Kidney (tissue), 22 donors: ENCODE measurements at regions of chr16 and their contacts with region 1.

Region 1: GRCh38 chr16:67928561-67929364 is 2.9 kb downstream of the CTRL start:
- DNase-seq: peak; percentile 67 to 89 (median 77)
- H3K4me3 ChIP-seq: no peak overlapping the region
- H3K27ac ChIP-seq: no peak overlapping the region
- H3K4me1 ChIP-seq: peaks cover 0 to 6% (median 0%) of the 10 kb centered on the region in 3 donors
- H3K27me3 ChIP-seq: no peaks in the 10 kb centered on the region
- CTCF ChIP-seq: peak; percentile 85

Region 2: GRCh38 chr16:67672739-67673662 is 255.8 kb before region 1 on chr16:
- intact Hi-C with region 1: loop called (anchors 10 kb)
- DNase-seq: peak; percentile 51 to 83 (median 63)
- H3K4me3 ChIP-seq: peak overlapping the region in 1 of 3 donors; percentile 34
- H3K27ac ChIP-seq: peak overlapping the region; percentile 77 to 85
- H3K4me1 ChIP-seq: peaks cover 0 to 23% (median 20%) of the 10 kb centered on the region in 3 donors
- H3K27me3 ChIP-seq: no peaks in the 10 kb centered on the region
- CTCF ChIP-seq: peak; percentile 78

Region 3: DNA sequence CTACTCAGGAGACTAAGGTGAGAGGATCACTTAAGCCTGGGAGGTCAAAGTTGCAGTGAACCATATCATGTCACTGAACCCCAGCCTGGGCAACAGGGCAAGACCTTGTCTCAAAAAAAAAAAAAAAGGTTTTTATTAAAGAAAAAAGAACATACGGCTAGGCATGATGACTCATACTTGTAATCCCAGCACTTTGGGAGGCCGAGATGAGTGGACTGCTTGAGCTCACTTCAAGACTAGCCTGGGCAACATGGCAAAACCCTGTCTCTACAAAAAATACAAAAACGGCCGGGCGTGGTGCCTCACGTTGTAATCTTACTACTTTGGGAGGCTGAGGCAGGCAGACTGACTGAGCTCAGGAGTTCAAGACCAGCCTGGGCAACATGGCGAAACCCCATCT is 160.8 kb before region 1 on chr16:
- intact Hi-C with region 1: no loop called
- DNase-seq: no peak
- H3K4me3 ChIP-seq: no peak overlapping the region
- H3K27ac ChIP-seq: no peak overlapping the region
- H3K4me1 ChIP-seq: peaks cover 0 to 5% (median 4%) of the 10 kb centered on the region in 3 donors
- H3K27me3 ChIP-seq: no peaks in the 10 kb centered on the region
- CTCF ChIP-seq: no peak

Region 4: GRCh38 chr16:67816240-67817031 is 112.3 kb before region 1 on chr16:
- intact Hi-C with region 1: loop called (anchors 10 kb)
- DNase-seq: peak; percentile 84 to 94 (median 87)
- H3K4me3 ChIP-seq: no peak overlapping the region
- H3K27ac ChIP-seq: no peak overlapping the region
- H3K4me1 ChIP-seq: no peaks in the 10 kb centered on the region
- H3K27me3 ChIP-seq: no peaks in the 10 kb centered on the region
- CTCF ChIP-seq: peak; percentile 100